Colonic mucosa (tissue), 4 donors: ENCODE measurements at regions of chr7 and their contacts with region 1.

Region 1: DNA sequence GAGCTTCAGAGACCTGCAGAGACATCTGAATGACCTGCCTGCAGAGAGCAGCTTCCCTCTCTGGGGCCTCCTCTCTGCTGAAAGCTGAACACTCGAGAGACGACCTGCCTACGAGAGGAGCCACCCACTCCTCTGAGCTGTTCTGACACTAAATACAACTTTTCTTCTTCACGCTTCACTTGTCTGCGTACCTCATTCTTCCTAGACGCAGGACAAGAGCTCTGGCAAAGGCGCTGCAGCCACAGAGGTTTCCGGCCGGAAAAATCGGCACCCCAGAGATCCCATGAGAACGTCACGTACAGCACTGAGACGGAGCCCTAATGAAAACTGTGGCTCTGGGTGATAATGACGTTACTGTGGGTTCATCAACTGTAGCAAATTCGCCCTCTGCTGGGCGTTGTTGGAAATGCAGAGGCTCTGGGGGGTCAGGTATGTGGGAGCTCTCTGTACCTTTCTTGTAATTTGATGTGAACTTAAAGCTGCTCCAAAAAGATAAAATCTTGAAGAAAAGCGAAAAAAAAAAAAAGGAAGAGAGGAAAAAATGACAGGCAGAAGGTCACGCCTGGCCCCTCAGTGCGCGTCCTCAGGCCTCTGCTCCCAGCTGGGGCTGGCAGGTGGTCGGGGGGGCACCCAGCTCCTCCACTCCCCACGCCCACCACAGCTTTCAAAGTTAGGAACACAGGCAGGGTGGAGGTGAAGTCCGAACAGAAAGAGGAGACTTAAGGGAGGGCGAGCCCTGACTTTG is 120.7 kb downstream of the DYNC2I1 start:
- DNase-seq: peak; percentile 93
- H3K4me3 ChIP-seq: peak overlapping the region; percentile 22
- H3K27ac ChIP-seq: no peak overlapping the region
- H3K4me1 ChIP-seq: no peaks in the 10 kb centered on the region
- H3K27me3 ChIP-seq: no peaks in the 10 kb centered on the region
- CTCF ChIP-seq: peak; percentile 97

Region 2: GRCh38 chr7:158695726-158696452 is 281.1 kb before region 1 on chr7:
- intact Hi-C with region 1: loop called (anchors 2 kb)
- DNase-seq: peak; percentile 75
- H3K4me3 ChIP-seq: no peak overlapping the region
- H3K27ac ChIP-seq: peak overlapping the region; percentile 7
- H3K4me1 ChIP-seq: no peaks in the 10 kb centered on the region
- H3K27me3 ChIP-seq: no peaks in the 10 kb centered on the region
- CTCF ChIP-seq: peak; percentile 60